ENCODE measurements at regions of chr22 and their contacts with region 1.

Region 1: DNA sequence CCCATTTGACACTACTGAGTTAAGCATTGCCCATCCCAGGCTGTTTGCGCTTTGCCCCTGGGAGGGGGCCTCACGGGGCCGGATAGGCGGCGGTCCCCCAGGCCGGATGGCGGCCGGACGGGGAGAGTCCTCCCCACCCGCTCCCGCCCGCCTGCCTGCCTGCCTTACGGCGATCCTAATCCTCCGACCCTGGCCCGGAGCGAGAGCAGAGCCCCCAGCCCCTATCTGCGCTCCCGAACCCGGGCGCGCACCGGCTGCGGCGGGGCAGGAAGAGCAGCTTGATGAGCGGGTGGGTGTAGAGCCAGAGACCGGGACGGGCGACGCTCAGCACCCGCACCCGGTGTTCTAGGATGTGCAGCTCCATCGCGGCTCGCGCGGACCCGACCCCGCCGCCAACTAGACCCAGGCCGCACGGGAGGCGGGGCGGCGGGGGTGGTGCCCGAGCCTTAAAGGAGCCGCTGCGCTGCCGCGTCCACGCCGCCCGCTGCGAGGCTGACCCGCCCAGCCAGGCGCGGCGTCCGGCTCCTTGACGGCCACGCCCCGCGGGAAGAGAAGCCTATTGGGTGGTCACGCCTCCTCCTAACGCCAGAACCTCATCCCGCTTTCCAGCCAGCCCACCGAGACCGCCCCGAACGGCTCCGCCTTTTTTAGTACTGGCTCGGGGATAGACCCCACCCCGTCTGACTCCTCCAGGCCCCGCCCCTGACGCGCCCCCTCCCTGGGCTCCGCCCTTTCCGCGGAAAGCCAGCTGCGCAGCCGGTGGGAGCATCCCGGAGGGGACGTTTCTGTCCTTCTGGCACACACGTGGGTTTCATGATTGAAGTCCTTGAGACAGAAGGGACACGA is at the start of gene CASTOR1:
- H3K4me3 ChIP-seq: peak within 1 kb of the TSS; percentile 60
- H3K27ac ChIP-seq: no peak within 1 kb of the TSS
- H3K4me1 ChIP-seq: no peaks in the 10 kb centered on the region; the same call in 1 of the 2 replicates
- CTCF ChIP-seq: no peak

Region 2: DNA sequence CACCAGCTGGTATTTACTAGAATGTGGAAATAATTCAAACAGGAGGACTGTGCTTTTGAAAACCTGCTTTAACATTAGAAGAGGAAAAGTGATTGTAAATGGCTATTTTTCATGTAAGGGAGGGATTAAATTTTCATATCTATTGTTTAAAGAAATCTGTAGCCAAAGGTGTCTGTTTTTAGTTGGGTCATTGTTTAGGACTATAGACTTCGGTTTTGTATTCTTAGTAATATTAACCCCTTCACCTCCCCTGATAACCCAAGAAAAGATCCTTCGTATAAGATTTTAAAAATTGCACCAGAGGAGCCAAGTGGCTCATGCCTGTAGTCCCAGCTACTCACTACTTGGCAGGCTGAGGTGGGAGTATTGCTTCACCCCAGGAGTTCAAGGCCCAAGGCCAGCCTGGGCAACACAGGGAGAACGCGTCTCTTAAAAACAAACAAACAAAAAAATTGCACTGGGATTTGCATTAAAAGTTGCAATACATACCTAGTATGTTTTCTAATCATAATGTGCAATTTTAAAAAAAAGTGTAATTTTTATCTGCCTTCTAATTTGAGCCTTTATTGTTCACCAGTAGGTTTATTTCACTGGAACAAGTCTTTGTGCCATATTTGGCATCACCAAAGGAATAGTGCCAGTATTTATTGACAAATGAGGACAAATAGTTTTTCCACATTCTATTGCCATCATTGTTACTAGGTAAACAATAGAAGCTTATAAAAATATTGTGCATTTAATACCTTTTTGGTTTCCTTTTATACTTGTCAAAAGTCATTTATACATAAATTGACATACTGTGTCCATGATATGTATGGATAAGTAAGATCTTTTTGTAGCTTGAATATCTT is 372.1 kb before region 1 on chr22:
- CTCF ChIA-PET with region 1: no interaction called
- POLR2A ChIA-PET with region 1: no interaction called
- H3K4me3 ChIP-seq: no peak overlapping the region
- H3K27ac ChIP-seq: peak overlapping the region; percentile 29; the same call in 1 of the 2 replicates
- H3K4me1 ChIP-seq: peaks cover 55% of the 10 kb centered on the region
- CTCF ChIP-seq: no peak

Region 3: GRCh38 chr22:30253205-30253852 is 36.0 kb before region 1 on chr22:
- CTCF ChIA-PET with region 1: interaction called, 26 read pairs
- POLR2A ChIA-PET with region 1: no interaction called
- H3K4me3 ChIP-seq: no peak overlapping the region
- H3K27ac ChIP-seq: no peak overlapping the region; the same call in 1 of the 2 replicates
- H3K4me1 ChIP-seq: no peaks in the 10 kb centered on the region; the same call in 1 of the 2 replicates
- CTCF ChIP-seq: no peak

Region 4: GRCh38 chr22:30270832-30271231 is 18.5 kb before region 1 on chr22:
- CTCF ChIA-PET with region 1: interaction called, 54 read pairs
- POLR2A ChIA-PET with region 1: interaction called, 3 read pairs
- H3K4me3 ChIP-seq: no peak overlapping the region
- H3K27ac ChIP-seq: no peak overlapping the region
- H3K4me1 ChIP-seq: no peaks in the 10 kb centered on the region
- CTCF ChIP-seq: no peak

Region 5: GRCh38 chr22:30301995-30302809 is 12.8 kb after region 1 on chr22:
- CTCF ChIA-PET with region 1: interaction called, 15 read pairs
- POLR2A ChIA-PET with region 1: interaction called, 7 read pairs
- H3K4me3 ChIP-seq: no peak overlapping the region
- H3K27ac ChIP-seq: no peak overlapping the region
- H3K4me1 ChIP-seq: no peaks in the 10 kb centered on the region
- CTCF ChIP-seq: no peak

Region 6: GRCh38 chr22:30326706-30327362 is 37.5 kb after region 1 on chr22 and contains the start of gene TBC1D10A:
- CTCF ChIA-PET with region 1: interaction called, 60 read pairs
- POLR2A ChIA-PET with region 1: interaction called, 34 read pairs
- H3K4me3 ChIP-seq: peak within 1 kb of the TSS; percentile 85
- H3K27ac ChIP-seq: peak within 1 kb of the TSS; percentile 72
- H3K4me1 ChIP-seq: peaks cover 11% of the 10 kb centered on the region
- CTCF ChIP-seq: no peak

Region 7: DNA sequence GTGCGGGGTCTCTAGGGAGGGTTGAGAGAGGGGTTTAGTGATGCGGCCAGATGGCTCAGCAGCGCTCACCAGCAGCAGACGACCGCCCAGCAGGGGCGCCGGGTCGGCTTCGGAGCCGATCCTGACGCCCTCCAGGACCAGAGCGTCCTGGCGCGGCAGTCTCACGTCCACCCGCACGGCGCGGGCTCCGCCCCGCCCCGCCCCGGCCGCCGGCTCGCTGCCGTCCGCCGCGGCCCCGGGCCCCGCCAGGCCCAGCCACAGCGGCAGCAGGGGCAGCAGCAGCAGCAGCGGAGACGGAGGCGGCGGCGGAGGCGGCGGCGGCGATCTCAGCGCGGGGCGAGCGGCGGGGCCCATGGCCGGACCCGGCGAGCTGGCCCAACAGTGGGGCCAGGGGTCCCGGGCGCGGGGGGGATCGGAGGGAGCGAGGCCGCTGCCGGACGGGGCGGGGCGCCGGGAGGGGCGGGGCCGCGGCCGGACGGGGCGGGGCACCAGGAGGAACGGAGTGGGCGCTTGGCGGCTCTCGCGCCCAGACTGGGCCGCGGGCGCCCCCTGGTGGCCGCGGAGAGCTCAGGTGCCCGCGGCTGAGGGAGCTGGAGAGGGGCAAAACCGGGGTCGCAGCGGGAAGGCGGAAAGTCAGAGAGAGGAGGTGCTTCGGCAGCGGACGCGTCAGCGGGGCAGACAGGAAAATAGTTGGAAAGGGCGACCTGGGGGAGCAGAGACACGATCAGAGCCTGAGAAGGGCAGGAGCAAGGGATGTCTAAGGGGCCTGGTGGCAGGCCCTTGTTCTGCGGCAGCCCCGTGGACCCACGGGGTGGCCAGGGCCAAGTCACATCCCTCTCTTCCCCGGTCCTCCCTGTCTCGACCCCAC is 97.8 kb after region 1 on chr22 and contains the start of gene RNF215:
- CTCF ChIA-PET with region 1: interaction called, 80 read pairs
- POLR2A ChIA-PET with region 1: interaction called, 6 read pairs
- H3K4me3 ChIP-seq: peak within 1 kb of the TSS; percentile 62
- H3K27ac ChIP-seq: peak within 1 kb of the TSS; percentile 76; the same call in 1 of the 2 replicates
- H3K4me1 ChIP-seq: peaks cover 2% of the 10 kb centered on the region; the same call in 1 of the 2 replicates
- CTCF ChIP-seq: peak; percentile 98

Region 8: DNA sequence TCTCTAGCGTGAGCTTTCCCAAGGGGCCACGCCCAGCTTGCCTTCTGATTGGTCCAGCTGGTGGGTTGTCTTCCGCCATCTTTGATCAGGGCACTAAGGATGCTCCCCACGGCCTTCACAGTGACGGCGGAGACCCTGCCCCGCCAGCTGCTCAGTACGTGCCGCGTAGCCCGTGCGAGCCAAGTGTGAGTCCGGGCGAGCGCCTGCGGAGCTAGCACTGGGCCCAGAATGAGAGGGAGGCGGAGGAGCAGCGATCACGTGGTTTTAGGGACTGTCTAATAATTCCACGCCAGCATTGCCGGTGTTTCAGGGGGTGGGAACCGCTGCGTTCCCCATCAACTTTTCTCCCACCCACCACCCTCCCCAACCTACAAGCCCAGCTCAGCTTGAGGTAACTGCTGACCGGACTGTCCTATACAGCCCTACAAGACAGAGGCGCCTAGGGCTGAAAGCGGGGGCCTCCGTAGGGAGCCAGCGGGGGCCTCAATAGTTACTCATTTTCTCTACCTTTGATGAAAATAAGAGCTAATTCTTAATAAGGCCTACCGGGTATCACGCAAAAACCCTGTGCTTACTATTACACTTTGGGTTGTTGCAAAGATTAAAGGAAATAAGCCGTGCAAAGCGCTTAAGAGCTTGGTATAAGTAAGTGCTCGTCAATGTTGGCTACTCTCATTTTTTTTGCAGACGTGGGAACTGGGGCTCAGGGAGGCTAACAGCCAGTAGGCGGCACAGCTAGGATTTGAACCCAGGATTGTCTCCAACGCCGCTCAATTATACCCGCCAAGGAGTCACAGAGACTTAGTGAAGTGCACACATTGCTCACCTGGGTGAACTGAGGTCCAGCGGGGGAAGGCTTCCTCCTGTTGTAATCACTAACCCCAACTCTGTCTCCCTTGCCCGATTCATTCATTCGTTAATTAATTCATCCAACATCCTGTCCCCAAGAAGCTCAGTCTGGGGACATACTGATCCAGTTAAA is 134.9 kb after region 1 on chr22:
- CTCF ChIA-PET with region 1: interaction called, 16 read pairs
- POLR2A ChIA-PET with region 1: interaction called, 10 read pairs
- H3K4me3 ChIP-seq: peak overlapping the region; percentile 39
- H3K27ac ChIP-seq: peak overlapping the region; percentile 98
- H3K4me1 ChIP-seq: peaks cover 28% of the 10 kb centered on the region
- CTCF ChIP-seq: no peak; the same call in 1 of the 2 replicates

Measured in HEK293 (cell line).